Calu3 (cell line): ENCODE measurements at regions of chr5 and their contacts with region 1.

Region 1: GRCh38 chr5:113378959-113379541 is 55.7 kb downstream of the TSSK1B start:
- DNase-seq: peak; percentile 69
- H3K4me3 Mint-ChIP-seq: no peak overlapping the region
- H3K27ac Mint-ChIP-seq: no peak overlapping the region
- H3K4me1 Mint-ChIP-seq: no peaks in the 10 kb centered on the region
- H3K27me3 Mint-ChIP-seq: no peaks in the 10 kb centered on the region
- CTCF ChIP-seq: peak; percentile 73

Region 2: GRCh38 chr5:113336975-113337374 is 42.1 kb before region 1 on chr5:
- CTCF ChIA-PET with region 1: interaction called, 3 read pairs
- intact Hi-C with region 1: loop called (anchors 2 kb)
- DNase-seq: peak; percentile 54
- H3K4me3 Mint-ChIP-seq: no peak overlapping the region
- H3K27ac Mint-ChIP-seq: no peak overlapping the region
- H3K4me1 Mint-ChIP-seq: no peaks in the 10 kb centered on the region
- H3K27me3 Mint-ChIP-seq: no peaks in the 10 kb centered on the region
- CTCF ChIP-seq: peak; percentile 66